Dendritic cell treated with granulocyte-macrophage colony-stimulating factor and Interleukin-4, amounts not matched to agents 40 ng/mL and 50 ng/mL, for 4 days (primary cell): ENCODE measurements at regions of chr20 and their contacts with region 1.

Region 1: DNA sequence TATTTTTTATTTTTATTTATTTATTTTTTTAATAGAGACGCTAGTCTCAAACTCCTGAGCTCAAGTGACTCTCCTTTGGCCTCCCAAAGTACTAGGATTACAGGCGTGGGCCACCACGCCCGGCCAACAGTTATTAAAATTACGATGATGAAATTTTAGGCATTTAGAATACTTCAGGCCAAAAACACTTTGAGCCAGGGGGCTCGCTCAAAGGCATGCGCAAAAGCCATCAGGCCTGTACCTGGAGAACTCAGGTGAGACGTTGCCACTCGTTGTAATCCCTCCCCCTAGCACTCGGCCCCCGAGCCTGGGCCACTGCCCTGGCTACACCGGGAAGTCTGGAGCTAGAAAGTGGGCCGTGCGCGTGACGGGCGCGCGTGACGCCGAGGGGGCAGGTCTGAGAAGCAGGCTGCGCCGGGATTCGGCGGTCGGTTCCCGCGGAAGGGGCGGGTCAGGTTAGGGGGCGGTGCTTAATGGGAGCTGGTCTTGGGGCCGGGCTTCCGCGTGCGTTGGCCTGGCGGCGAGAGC is 337 bp upstream of the CBFA2T2 start:
- H3K4me3 Mint-ChIP-seq: peak overlapping the region; percentile 83
- H3K27ac Mint-ChIP-seq: peak overlapping the region; percentile 83
- H3K4me1 Mint-ChIP-seq: peaks cover 13% of the 10 kb centered on the region
- H3K27me3 Mint-ChIP-seq: no peaks in the 10 kb centered on the region

Region 2: DNA sequence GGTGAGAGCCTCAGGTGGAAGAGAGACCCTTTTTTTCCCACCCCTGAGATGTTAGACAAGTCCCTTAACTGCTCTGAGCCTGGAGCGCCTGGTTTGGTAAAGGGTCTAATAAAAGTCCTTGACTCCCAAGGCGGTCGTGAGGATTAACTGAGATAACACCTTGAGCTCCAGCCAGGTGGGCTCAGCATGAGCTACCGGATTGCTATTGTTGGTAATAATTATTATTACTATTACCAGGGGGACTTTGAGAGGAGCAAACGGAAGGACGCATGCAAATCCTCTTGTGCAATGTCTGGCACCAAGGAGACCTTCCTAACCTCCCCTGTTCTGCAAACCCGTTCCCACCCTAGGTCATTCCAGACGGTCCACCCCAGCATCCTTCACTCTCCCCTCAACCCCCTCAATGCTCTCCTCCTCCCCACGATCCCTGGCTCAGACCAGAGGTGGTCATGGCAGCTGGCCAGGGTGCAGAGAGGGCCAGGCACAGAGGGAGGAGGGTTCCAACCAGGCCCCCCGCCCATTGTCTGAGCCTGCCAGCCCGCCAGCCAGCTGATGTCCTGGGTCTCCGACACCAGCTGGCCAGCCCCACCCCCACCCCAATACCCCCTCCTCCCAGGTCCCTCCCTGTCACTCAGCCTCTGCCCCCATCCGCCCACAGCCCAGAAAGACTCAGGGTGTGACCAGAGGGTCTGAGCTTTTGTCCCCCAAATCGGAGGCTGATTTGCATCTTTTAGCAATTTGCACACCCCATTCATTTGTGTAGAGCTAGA is 14.0 kb before region 1 on chr20:
- intact Hi-C with region 1: loop called (anchors 1 kb)
- H3K4me3 Mint-ChIP-seq: no peak overlapping the region
- H3K27ac Mint-ChIP-seq: peak overlapping the region; percentile 21
- H3K4me1 Mint-ChIP-seq: peaks cover 12% of the 10 kb centered on the region
- H3K27me3 Mint-ChIP-seq: no peaks in the 10 kb centered on the region

Region 3: GRCh38 chr20:33554914-33555420 is 65.4 kb after region 1 on chr20:
- intact Hi-C with region 1: loop called (anchors 2 kb)
- H3K4me3 Mint-ChIP-seq: no peak overlapping the region
- H3K27ac Mint-ChIP-seq: peak overlapping the region; percentile 83
- H3K4me1 Mint-ChIP-seq: peaks cover 30% of the 10 kb centered on the region
- H3K27me3 Mint-ChIP-seq: no peaks in the 10 kb centered on the region